ENCODE measurements at regions of chr1 and their contacts with region 1.

Region 1: GRCh38 chr1:65958561-65959350 is 166.1 kb downstream of the PDE4B start:
- DNase-seq: peak in 1 of 3 donors; percentile 38
- ATAC-seq: peak; percentile 54
- H3K4me3 ChIP-seq: no peak overlapping the region
- H3K4me1 ChIP-seq: peaks cover 4% of the 10 kb centered on the region
- CTCF ChIP-seq: peak; percentile 51

Region 2: GRCh38 chr1:65890201-65890843 is 68.4 kb before region 1 on chr1:
- intact Hi-C with region 1: no loop called
- DNase-seq: no peak
- ATAC-seq: no peak
- H3K4me3 ChIP-seq: no peak overlapping the region
- H3K4me1 ChIP-seq: no peaks in the 10 kb centered on the region
- CTCF ChIP-seq: no peak

Region 3: DNA sequence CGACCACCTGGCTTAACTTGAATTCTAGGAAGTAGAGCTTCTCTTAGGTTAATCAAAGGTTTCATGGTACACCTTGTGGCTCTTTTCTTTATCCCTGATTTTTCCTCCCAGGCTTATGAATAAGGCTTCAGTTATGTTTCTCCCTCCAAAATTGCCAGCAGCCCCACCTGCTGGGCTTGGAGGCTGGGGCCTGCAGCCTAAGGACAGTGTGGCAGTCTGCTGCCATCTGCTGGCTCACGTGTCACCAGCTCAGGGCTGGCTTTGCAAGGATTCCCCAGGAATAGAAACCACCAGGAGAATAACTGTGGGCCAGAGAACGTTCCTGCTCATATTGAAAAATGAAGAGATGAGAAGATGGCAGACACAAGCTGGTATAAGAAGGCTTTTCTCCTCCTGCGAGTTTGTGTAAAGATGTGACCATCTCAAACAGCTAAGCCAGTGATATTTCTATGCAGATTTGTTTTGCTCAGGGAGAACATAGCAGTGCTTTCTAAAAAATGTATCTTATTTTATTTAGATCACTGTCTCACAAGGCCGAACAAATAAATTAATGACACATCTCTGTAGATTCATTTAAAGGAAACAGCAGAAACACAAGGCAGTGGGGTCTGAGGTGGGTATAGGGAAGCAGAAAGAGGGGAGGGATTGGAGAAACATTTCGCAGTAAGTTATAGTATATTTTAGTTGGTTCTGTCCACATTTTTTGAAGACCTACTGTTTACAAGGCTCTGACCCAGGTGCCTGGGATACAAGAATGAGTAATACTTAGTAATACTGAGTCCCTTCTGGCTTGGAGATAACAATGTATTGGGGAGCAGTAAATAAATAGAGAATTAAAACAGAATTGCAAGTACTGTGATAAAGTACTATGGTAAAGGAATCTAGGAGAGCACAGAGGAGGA is 284.1 kb after region 1 on chr1:
- intact Hi-C with region 1: loop called (anchors 1 to 5 kb)
- DNase-seq: peak; percentile 82 to 92 (median 88)
- ATAC-seq: peak; percentile 98
- H3K4me3 ChIP-seq: no peak overlapping the region
- H3K4me1 ChIP-seq: peaks cover 2% of the 10 kb centered on the region
- CTCF ChIP-seq: peak; percentile 88

Region 4: GRCh38 chr1:66452162-66452561 is 493.4 kb after region 1 on chr1:
- intact Hi-C with region 1: loop called in 1 of 2 experiments (anchors 10 kb)
- DNase-seq: no peak
- ATAC-seq: no peak
- H3K4me3 ChIP-seq: no peak overlapping the region
- H3K4me1 ChIP-seq: no peaks in the 10 kb centered on the region
- CTCF ChIP-seq: no peak